Transverse colon (tissue), 4 donors: ENCODE measurements at regions of chr17 and their contacts with region 1.

Region 1: GRCh38 chr17:31015639-31016038 is 44.8 kb downstream of the RNF135 start:
- DNase-seq: no peak
- H3K4me3 ChIP-seq: no peak overlapping the region
- H3K27ac ChIP-seq: no peak overlapping the region
- H3K4me1 ChIP-seq: no peaks in the 10 kb centered on the region
- H3K27me3 ChIP-seq: no peaks in the 10 kb centered on the region
- CTCF ChIP-seq: no peak
- EP300 ChIP-seq: no peak
- POLR2A ChIP-seq: no peak

Region 2: DNA sequence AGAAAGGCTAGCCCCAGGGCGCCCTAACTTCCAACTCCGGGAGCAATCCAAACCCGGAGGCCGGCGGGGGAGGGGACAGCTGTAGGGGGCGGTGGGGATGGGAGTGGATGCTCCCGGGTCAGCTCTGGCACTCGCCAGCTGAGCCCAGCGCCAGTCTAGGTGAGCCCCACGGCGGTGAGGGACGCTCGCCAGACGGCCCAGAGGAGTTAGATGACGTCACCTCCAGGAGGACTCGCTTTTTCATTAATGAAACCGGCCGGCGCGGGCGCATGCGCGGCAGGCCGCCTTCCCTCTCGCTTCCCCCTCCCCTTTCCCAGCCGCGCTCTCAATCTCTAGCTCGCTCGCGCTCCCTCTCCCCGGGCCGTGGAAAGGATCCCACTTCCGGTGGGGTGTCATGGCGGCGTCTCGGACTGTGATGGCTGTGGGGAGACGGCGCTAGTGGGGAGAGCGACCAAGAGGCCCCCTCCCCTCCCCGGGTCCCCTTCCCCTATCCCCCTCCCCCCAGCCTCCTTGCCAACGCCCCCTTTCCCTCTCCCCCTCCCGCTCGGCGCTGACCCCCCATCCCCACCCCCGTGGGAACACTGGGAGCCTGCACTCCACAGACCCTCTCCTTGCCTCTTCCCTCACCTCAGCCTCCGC is 79.1 kb after region 1 on chr17 and contains the start of gene NF1:
- in situ Hi-C with region 1: loop called in 1 of 4 experiments (anchors 10 kb)
- intact Hi-C with region 1: no loop called
- DNase-seq: peak; percentile 97
- H3K4me3 ChIP-seq: peak within 1 kb of the TSS; percentile 83 to 97 (median 94)
- H3K27ac ChIP-seq: peak within 1 kb of the TSS; percentile 89 to 97 (median 94)
- H3K4me1 ChIP-seq: peaks cover 0 to 17% (median 12%) of the 10 kb centered on the region in 4 donors
- H3K27me3 ChIP-seq: no peaks in the 10 kb centered on the region
- CTCF ChIP-seq: no peak
- EP300 ChIP-seq: no peak
- POLR2A ChIP-seq: peak; percentile 71
- total RNA-seq, gene NF1: 34.8 to 106 (median 59.2) TPM

Region 3: GRCh38 chr17:31216053-31216751 is 200.6 kb after region 1 on chr17:
- in situ Hi-C with region 1: loop called (anchors 5 to 10 kb)
- intact Hi-C with region 1: loop called (anchors 5 kb)
- DNase-seq: no peak
- H3K4me3 ChIP-seq: no peak overlapping the region
- H3K27ac ChIP-seq: no peak overlapping the region
- H3K4me1 ChIP-seq: no peaks in the 10 kb centered on the region
- H3K27me3 ChIP-seq: no peaks in the 10 kb centered on the region
- CTCF ChIP-seq: peak; percentile 60 to 66 (median 65)
- EP300 ChIP-seq: no peak
- POLR2A ChIP-seq: no peak